Activated B cell treated with CpG ODN at 0.5 μM for 24 hours (primary cell): ENCODE measurements at regions of chr2 and their contacts with region 1.

Region 1: GRCh38 chr2:144686518-144687215 is 166.7 kb upstream of the ZEB2 start:
- DNase-seq: no peak
- ATAC-seq: peak; percentile 49
- H3K4me3 Mint-ChIP-seq: no peak overlapping the region
- H3K27ac Mint-ChIP-seq: peak overlapping the region; percentile 1
- H3K4me1 Mint-ChIP-seq: peaks cover 34% of the 10 kb centered on the region
- H3K27me3 Mint-ChIP-seq: no peaks in the 10 kb centered on the region
- CTCF ChIP-seq: no peak

Region 2: GRCh38 chr2:144703852-144704708 is 17.4 kb after region 1 on chr2:
- CTCF ChIA-PET with region 1: no interaction called
- POLR2A ChIA-PET with region 1: interaction called, 3 read pairs
- intact Hi-C with region 1: loop called (anchors 2 kb)
- DNase-seq: peak; percentile 27
- ATAC-seq: peak; percentile 81
- H3K4me3 Mint-ChIP-seq: peak overlapping the region; percentile 36
- H3K27ac Mint-ChIP-seq: peak overlapping the region; percentile 73
- H3K4me1 Mint-ChIP-seq: peaks cover 51% of the 10 kb centered on the region
- H3K27me3 Mint-ChIP-seq: no peaks in the 10 kb centered on the region
- CTCF ChIP-seq: no peak

Region 3: DNA sequence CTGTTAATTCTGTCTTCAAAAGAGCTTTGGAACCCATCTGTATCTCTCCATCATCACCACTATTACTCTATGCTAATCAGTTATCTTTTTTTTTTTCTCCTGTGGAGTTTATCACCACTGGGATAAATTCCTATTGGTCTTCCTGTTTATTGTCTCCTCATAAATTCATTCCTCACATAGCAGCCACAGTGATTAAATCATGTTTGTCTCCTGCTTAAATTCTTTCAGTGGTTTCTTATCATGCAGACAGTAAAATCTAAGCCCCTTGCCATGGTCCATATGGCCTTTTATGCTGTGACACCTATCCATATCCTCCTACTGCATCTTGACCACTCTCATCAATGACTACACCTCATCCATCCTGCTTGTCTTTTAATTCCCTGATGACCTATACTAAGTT is 73.1 kb after region 1 on chr2:
- CTCF ChIA-PET with region 1: no interaction called
- POLR2A ChIA-PET with region 1: no interaction called
- intact Hi-C with region 1: no loop called
- DNase-seq: no peak
- ATAC-seq: no peak
- H3K4me3 Mint-ChIP-seq: no peak overlapping the region
- H3K27ac Mint-ChIP-seq: no peak overlapping the region
- H3K4me1 Mint-ChIP-seq: peaks cover 6% of the 10 kb centered on the region
- H3K27me3 Mint-ChIP-seq: no peaks in the 10 kb centered on the region
- CTCF ChIP-seq: no peak